T-cell (primary cell): ENCODE measurements at regions of chr9 and their contacts with region 1.

Region 1: DNA sequence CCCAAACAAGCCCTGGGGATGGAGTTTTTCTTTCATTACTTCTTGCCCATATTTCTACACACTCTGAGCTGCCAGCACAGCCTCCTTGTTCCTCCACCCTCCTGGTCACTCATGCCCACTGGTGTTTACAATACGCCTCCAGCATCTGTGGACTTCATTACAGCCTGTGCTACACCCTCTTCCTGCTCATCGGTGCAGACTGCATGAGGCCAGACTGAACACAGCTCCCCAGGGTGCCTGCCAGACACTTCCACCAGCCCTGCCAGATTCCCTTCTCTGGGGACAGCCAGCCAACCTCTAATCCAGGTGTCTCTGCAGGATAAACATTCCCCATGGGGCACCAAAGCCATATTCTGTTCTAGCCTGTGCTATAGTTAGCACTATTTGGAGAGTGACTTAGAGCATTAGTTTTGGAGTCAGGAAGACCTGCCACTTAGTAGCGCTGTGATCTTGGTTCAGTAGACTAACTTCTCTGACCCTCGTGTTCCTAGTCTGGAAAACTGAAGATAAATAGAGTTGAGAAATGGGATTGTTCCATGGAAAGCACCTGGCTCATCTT is 163.8 kb upstream of the KLF4 start:
- DNase-seq: no peak
- ATAC-seq: no peak
- H3K4me3 ChIP-seq: no peak overlapping the region
- H3K4me3 Mint-ChIP-seq: no peak overlapping the region
- H3K27ac ChIP-seq: no peak overlapping the region
- H3K27ac Mint-ChIP-seq: no peak overlapping the region
- H3K4me1 ChIP-seq: no peaks in the 10 kb centered on the region
- H3K4me1 Mint-ChIP-seq: no peaks in the 10 kb centered on the region
- H3K27me3 ChIP-seq: peaks cover 0 to 2% of the 10 kb centered on the region in 2 experiments
- H3K27me3 Mint-ChIP-seq: peaks cover 1 to 2% of the 10 kb centered on the region in 2 donors

Region 2: DNA sequence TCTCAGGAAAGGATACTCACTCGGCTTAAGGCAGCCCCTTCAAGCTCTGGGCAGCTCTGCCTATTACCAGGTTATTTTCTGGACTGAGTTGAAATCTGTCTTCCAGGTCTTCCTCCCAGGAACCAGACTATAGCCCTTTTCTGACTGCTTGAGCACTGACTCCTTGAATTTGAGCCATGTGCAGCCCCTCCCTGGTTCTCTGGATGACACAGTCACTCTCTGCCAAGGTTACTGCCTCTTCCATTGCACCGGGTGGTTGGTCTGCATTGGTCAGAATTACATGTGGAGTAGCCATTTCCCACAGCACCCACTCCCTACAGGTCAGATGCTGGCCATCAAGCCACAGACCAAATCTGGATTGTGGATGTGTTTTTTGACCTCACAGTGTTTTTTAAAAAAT is 245.7 kb before region 1 on chr9:
- CTCF ChIA-PET with region 1: interaction called in 1 of 2 experiments, 11 read pairs
- POLR2A ChIA-PET with region 1: no interaction called
- DNase-seq: no peak
- ATAC-seq: no peak
- H3K4me3 ChIP-seq: no peak overlapping the region
- H3K4me3 Mint-ChIP-seq: no peak overlapping the region
- H3K27ac ChIP-seq: no peak overlapping the region
- H3K27ac Mint-ChIP-seq: no peak overlapping the region
- H3K4me1 ChIP-seq: no peaks in the 10 kb centered on the region
- H3K4me1 Mint-ChIP-seq: no peaks in the 10 kb centered on the region
- H3K27me3 ChIP-seq: peaks cover 0 to 2% of the 10 kb centered on the region in 2 experiments
- H3K27me3 Mint-ChIP-seq: peaks cover 0 to 4% of the 10 kb centered on the region in 2 donors